OCI-LY7 (cell line): ENCODE measurements at regions of chr7 and their contacts with region 1.

Region 1: DNA sequence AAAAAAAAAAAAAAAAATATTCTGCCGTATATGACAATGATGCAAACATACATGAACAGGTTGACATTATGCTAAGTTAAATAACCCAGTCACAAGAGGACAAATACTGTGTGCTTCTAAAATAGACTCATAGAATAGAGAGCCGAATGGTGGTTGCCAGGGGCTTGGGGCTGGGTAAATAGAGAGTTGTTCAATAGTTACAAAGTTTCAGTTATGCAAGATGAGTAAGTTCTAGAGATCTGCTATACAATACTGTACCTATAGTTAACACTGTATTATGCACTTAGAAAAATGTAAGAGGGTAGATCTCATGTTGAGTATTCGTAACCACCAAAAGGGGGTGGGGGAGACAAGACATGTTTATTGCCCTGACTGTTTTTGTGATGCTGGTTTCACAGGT is 77.1 kb upstream of the GNAI1 start:
- DNase-seq: no peak
- H3K4me3 ChIP-seq: no peak overlapping the region
- H3K27ac ChIP-seq: no peak overlapping the region
- H3K4me1 ChIP-seq: no peaks in the 10 kb centered on the region
- CTCF ChIP-seq: no peak

Region 2: GRCh38 chr7:80453699-80454340 is 396.3 kb after region 1 on chr7:
- CTCF ChIA-PET with region 1: no interaction called
- POLR2A ChIA-PET with region 1: no interaction called
- intact Hi-C with region 1: loop called (anchors 5 kb)
- DNase-seq: peak; percentile 8
- H3K4me3 ChIP-seq: no peak overlapping the region
- H3K27ac ChIP-seq: no peak overlapping the region
- H3K4me1 ChIP-seq: no peaks in the 10 kb centered on the region
- CTCF ChIP-seq: peak; percentile 75